AG04449 (cell line): ENCODE measurements at regions of chr16 and their contacts with region 1.

Region 1: GRCh38 chr16:55701442-55702319 is 45.9 kb downstream of the SLC6A2 start:
- DNase-seq: no peak
- H3K4me3 ChIP-seq: no peak overlapping the region
- CTCF ChIP-seq: peak; percentile 52

Region 2: DNA sequence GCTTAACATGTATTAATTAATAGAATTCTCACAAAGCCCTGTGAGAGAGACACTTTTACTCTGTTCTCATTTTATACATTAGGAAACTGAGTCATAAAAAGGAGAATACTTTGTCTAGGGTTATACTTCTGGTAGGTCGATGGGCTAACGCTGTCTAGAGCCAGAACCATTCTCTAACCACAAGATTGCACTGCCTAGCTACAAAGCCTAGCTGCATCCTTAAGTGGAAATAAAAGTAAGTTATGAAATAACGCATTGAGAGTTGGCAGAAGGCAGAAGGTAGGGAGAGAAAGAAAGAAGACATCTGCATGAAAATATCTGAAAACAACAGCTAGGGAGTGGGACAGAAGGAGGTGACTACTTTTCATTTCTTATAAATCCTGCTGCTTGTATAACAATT is 344.4 kb before region 1 on chr16:
- CTCF ChIA-PET with region 1: no interaction called
- POLR2A ChIA-PET with region 1: no interaction called
- DNase-seq: no peak
- H3K4me3 ChIP-seq: no peak overlapping the region
- CTCF ChIP-seq: no peak

Region 3: GRCh38 chr16:55494994-55495421 is 206.7 kb before region 1 on chr16:
- CTCF ChIA-PET with region 1: interaction called, 12 read pairs
- POLR2A ChIA-PET with region 1: no interaction called
- DNase-seq: peak; percentile 98
- H3K4me3 ChIP-seq: no peak overlapping the region
- CTCF ChIP-seq: peak; percentile 29

Region 4: GRCh38 chr16:55543472-55543871 is 158.2 kb before region 1 on chr16:
- CTCF ChIA-PET with region 1: interaction called, 59 read pairs
- POLR2A ChIA-PET with region 1: no interaction called
- DNase-seq: no peak
- H3K4me3 ChIP-seq: no peak overlapping the region
- CTCF ChIP-seq: no peak

Region 5: GRCh38 chr16:55687802-55688201 is 13.9 kb before region 1 on chr16:
- CTCF ChIA-PET with region 1: interaction called, 12 read pairs
- POLR2A ChIA-PET with region 1: no interaction called
- DNase-seq: no peak
- H3K4me3 ChIP-seq: no peak overlapping the region
- CTCF ChIP-seq: no peak

Region 6: DNA sequence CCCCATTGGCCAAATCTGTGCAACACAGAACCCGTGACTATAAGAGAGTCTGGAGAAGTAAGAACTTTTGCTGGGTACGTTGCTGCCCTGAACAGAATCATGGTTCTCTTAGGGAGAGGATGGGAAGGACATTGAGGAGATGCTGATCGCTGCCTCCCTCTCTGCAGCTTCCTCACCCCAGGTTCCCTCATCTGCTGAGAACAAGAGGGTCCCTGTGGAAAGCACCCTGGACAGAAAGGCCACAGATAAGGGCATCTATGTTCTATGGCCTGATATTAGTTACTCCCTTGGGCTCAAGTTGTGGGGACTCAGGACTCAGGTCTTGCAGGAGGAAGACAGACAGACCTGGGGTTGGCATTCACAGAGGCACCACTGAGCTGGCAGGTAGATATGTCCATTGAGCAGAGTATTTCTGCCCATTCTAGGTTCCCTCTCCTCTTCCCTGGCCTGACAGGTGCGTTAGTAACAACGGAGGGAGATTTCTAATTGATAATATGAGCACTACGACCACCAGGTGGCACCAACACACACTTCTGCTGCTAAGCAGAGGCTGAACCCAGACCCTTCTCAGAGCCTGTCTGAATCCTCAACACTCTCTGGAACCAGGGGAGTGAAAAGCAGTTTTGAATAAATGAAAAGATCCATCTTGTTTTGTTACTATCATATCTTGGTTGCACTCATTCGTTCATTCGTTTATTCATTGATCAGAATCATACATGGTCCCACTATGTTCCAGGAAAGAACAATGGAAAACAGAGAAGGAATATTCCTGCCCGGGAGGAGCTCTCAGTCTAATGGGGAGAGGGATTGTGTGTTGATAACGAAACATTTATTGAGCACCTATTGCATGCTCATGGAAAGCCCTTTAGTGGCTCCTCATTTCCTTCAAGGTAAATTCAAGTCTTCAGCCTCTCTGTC is 10.5 kb after region 1 on chr16:
- CTCF ChIA-PET with region 1: interaction called, 21 read pairs
- POLR2A ChIA-PET with region 1: no interaction called
- DNase-seq: no peak
- H3K4me3 ChIP-seq: no peak overlapping the region
- CTCF ChIP-seq: peak; percentile 69

Region 7: DNA sequence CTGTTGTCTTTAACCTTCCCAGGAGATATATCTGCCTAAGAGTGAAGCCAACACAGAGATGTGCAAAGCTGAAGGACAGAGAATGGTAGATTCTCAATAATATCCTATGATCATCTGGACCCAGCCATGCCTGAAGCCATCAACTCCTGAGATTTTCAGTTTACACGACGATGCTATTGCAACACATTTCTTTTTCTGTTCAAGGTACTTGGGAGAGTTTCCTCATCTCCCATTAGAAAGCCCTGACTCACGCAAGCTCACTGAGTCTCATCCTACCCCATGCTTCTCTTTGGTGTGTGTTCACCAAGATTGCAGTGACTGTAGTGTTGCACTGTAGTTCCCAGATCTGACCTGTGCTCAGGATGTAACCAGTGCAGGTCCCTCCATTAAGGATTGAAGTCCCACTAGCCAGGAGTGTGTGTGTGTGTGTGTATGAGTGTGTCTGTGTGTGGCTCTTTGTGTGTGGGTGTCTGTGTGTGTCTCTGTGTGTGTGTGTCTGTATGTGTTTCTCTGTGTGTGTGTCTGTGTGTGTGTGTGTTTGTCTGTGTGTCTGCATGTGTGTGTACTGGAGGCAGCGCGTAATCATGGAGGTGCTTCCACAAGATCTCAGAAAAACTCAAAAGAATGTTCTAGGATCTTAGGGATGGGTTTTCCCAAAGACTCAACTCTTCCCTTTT is 115.7 kb after region 1 on chr16:
- CTCF ChIA-PET with region 1: no interaction called
- POLR2A ChIA-PET with region 1: no interaction called
- DNase-seq: no peak
- H3K4me3 ChIP-seq: no peak overlapping the region
- CTCF ChIP-seq: no peak

Region 8: GRCh38 chr16:55842369-55843104 is 140.9 kb after region 1 on chr16:
- CTCF ChIA-PET with region 1: interaction called, 25 read pairs
- POLR2A ChIA-PET with region 1: no interaction called
- DNase-seq: no peak
- H3K4me3 ChIP-seq: no peak overlapping the region
- CTCF ChIP-seq: peak; percentile 54